Left ventricle myocardium superior (tissue), 1 donor: ENCODE measurements at regions of chr12 and their contacts with region 1.

Region 1: DNA sequence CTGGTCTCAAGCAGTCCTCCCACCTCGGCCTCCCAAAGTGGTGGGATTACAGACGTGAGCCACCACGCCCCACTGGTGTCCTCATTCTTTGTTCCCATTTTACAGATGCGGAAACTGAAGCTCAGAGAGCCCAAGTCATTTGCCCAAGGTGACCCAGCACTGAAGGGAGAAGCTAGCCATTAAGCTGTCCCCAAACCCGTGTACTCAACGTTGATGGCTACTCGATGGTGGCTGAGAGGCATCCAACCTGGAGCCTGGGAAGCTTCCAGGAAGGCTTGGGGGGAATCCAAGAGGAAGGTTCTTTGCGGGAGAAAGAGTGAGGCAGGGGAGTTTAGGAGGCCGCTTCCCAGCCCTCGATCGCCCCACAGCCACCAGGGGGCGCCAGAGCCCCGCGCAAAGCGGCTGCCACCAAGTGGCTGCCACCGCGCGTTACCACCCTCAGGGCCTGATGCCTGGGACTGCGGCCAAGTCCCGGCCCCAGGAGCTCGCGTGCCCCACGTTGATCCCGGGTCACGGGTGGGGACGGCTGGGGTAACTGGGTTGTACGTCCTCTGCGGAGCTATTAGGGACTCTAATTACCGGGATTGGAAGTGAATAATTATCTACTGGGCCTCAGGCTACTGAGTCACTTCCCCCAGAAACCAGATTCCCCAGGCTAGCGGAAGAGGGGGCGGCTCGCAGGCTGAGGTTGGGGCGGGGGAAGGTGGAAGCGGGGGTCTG is 8.8 kb upstream of the SH2B3 start:
- DNase-seq: peak; percentile 93
- ATAC-seq: peak; percentile 87

Region 2: DNA sequence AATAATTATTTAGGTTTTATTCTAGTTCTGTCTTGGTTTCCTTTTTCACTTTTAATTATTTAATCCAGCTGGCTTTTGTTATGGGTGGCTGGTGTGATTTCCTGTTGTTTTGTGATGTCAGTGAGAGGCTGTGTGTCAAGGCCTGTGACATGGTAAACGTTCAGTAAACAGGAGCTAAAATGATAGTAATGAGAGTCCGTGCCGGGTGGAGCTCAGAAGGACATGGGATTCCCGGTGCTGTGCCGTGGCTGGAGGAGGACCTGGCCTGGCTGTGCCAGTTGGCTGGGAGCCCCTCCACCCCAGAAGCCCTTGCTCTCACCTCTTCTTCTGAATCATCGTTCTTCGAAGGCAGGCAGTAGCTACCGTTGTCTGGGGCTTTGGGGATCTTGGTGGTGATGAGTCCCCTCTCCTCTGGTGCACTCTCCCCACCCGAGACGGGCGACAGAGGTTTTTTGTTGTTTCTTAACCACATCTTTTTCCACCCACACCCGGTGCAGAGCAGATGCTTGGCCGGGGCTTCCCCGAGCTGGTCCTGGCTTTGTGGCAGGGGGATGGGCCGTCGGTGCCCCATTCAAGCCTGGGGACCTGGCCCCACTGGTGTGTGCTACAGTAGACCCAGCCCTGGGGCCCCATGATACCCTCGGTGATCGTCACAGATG is 37.9 kb after region 1 on chr12:
- intact Hi-C with region 1: no loop called
- DNase-seq: peak; percentile 84
- ATAC-seq: peak; percentile 76

Region 3: DNA sequence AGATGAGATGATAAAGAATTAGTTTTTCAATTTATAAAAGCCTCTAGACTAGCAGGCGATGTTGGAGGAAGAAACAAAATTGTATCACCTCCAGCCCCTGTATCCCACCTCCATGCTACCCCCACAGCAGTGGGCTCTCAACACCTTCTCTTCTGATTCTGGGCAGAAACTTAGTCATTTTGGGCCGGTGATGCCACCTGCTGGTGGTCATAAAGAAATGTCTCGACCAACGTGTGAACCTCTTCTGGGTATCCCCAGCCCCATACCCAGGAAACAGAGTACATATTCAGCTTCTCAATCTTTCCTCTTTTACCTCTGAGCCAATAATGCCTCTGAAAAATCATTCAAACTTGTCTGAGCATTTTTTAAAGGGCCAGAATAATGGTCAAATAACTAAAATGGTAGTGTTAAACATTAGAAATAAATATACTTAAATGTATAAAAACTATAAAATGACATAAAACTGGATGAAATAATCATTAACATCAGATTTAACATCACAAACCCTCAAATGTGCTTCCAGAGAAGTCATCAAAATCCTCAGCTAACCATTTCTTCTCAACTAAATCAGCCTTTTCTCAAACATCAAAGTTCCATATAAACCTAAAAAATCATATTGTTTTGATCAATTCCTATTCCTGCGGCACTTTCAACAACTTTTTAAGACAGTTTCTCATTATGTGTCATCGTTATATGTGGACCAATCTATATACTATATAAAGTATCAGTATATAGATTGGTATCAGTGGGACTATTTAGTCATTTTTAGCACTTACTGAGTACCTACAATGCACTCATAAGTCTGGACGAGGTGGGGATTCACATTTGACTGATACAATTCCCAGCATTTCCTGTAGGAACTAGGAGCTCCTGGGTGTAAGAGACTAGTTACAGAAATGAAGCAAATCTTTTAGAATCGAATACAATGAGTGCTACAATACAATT is 132.8 kb after region 1 on chr12:
- intact Hi-C with region 1: loop called (anchors 10 kb)
- DNase-seq: no peak
- ATAC-seq: peak; percentile 52

Region 4: GRCh38 chr12:111556676-111557075 is 159.8 kb after region 1 on chr12:
- intact Hi-C with region 1: no loop called
- DNase-seq: no peak
- ATAC-seq: no peak

Region 5: DNA sequence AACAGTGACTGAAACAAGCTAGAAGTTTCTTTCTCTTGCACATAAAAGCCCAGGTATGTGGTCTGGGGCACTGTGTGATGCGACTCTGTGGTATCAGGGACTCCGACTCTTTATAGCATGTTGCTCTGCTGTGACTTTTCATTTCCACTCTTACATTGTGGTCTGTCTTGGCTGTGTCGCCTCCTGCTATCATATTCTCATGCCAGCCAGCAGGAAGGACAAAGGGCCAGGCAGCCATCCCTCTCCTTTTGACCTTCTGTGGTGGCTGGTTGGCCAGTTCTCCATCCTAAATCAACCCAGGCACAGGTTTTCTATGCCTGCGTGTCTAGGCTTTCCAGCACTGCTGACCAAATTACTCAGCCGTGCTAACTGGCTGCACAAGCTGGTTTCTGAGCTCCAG is 296.9 kb after region 1 on chr12:
- intact Hi-C with region 1: no loop called
- DNase-seq: no peak
- ATAC-seq: peak; percentile 80